Calu3 (cell line): ENCODE measurements at regions of chr14 and their contacts with region 1.

Region 1: DNA sequence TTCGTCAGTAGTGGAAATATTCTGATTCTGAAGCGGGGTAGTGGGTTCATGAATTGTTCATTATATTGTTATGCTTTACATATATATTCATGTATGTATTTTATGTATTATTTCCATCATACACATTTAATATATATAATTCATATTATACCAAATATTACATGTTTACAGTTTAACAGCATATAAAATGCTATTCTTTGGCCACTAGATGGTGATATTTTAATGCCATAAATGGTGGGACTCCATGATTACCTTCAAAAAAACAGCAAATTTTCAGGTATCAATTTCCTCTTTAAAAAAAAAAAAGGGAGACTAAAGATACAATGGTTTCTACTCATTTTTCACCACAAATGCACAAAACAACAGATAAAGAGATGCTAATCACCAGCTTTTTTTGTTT is 41.0 kb downstream of the BDKRB1 start:
- DNase-seq: no peak
- H3K4me3 Mint-ChIP-seq: no peak overlapping the region
- H3K27ac Mint-ChIP-seq: no peak overlapping the region
- H3K4me1 Mint-ChIP-seq: no peaks in the 10 kb centered on the region
- H3K27me3 Mint-ChIP-seq: no peaks in the 10 kb centered on the region
- CTCF ChIP-seq: no peak

Region 2: GRCh38 chr14:96167224-96168148 is 129.5 kb before region 1 on chr14:
- CTCF ChIA-PET with region 1: no interaction called
- intact Hi-C with region 1: no loop called
- DNase-seq: peak; percentile 16
- H3K4me3 Mint-ChIP-seq: no peak overlapping the region
- H3K27ac Mint-ChIP-seq: no peak overlapping the region
- H3K4me1 Mint-ChIP-seq: peaks cover 7% of the 10 kb centered on the region
- H3K27me3 Mint-ChIP-seq: peaks cover 31% of the 10 kb centered on the region
- CTCF ChIP-seq: no peak

Region 3: GRCh38 chr14:96424109-96424989 is 127.3 kb after region 1 on chr14:
- CTCF ChIA-PET with region 1: no interaction called
- intact Hi-C with region 1: loop called (anchors 1 kb)
- DNase-seq: peak; percentile 41
- H3K4me3 Mint-ChIP-seq: peak overlapping the region; percentile 56
- H3K27ac Mint-ChIP-seq: no peak overlapping the region
- H3K4me1 Mint-ChIP-seq: no peaks in the 10 kb centered on the region
- H3K27me3 Mint-ChIP-seq: no peaks in the 10 kb centered on the region
- CTCF ChIP-seq: peak; percentile 30